RWPE1 (cell line): ENCODE measurements at regions of chr17 and their contacts with region 1.

Region 1: GRCh38 chr17:41665566-41666236 is 23.0 kb upstream of the EIF1 start:
- DNase-seq: peak; percentile 98
- H3K27ac ChIP-seq: peak overlapping the region; percentile 100
- CTCF ChIP-seq: peak; percentile 93

Region 2: GRCh38 chr17:41579484-41580243 is 86.0 kb before region 1 on chr17:
- CTCF ChIA-PET with region 1: interaction called, 28 read pairs
- POLR2A ChIA-PET with region 1: interaction called, 4 read pairs
- DNase-seq: peak; percentile 89
- H3K27ac ChIP-seq: peak overlapping the region; percentile 100
- CTCF ChIP-seq: peak; percentile 96

Region 3: GRCh38 chr17:41624208-41625101 is 41.2 kb before region 1 on chr17 and contains the start of gene KRT17:
- CTCF ChIA-PET with region 1: interaction called, 10 read pairs
- POLR2A ChIA-PET with region 1: no interaction called
- DNase-seq: peak; percentile 88
- H3K27ac ChIP-seq: peak within 1 kb of the TSS; percentile 100
- CTCF ChIP-seq: no peak

Region 4: DNA sequence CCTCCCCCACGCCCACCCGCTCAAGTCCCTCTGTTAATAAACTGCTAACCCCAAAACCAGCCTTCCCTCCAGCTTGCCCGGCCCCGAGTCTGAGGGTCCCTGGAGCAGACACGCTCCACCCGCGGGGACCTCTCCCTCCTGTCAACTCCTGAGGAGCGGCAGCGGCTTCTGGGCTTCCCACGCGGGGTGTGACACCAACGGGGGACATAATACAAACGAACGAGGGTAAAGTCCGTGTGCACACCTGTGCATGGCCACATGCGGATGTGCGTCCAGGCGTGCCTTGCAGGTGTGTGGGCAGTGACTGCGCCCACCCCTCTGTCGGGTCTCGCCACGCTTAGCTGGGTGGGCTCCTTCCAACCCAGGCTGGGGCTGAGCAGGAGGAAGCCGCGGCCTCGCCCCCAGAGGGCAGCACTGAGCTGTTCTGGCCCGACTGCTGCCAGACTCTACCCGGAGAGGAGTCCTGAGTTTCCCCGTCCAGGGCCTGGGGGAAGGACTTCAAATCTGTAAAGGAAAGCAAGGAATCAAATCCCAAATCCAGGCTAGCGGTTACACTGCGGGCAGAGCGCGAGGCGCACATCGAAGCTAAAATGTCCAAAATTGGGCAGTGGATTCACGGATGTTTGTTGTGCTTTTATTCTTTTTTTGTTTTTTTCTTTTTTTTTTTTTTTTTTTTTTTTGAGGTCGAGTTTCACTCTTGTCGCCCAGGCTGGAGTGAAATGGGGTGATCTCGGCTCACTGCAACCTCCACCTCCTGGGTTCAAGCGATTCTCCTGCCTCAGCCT is 17.1 kb before region 1 on chr17:
- CTCF ChIA-PET with region 1: interaction called, 321 read pairs
- POLR2A ChIA-PET with region 1: interaction called, 4 read pairs
- DNase-seq: peak; percentile 76
- H3K27ac ChIP-seq: peak overlapping the region; percentile 100
- CTCF ChIP-seq: peak; percentile 85

Region 5: GRCh38 chr17:41688699-41689496 is 23.2 kb after region 1 on chr17 and contains the start of gene EIF1:
- CTCF ChIA-PET with region 1: interaction called, 10 read pairs
- POLR2A ChIA-PET with region 1: interaction called, 3 read pairs
- DNase-seq: peak; percentile 97
- H3K27ac ChIP-seq: peak within 1 kb of the TSS; percentile 99
- CTCF ChIP-seq: no peak